ENCODE measurements at regions of chr4 and their contacts with region 1.

Region 1: GRCh38 chr4:76758290-76758882 is 139.6 kb downstream of the SOWAHB start:
- DNase-seq: peak; percentile 81
- ATAC-seq: no peak
- H3K4me3 ChIP-seq: no peak overlapping the region
- H3K27ac ChIP-seq: peak overlapping the region; percentile 77; the same call in 1 of the 2 replicates
- H3K4me1 ChIP-seq: peaks cover 40% of the 10 kb centered on the region
- H3K27me3 ChIP-seq: no peaks in the 10 kb centered on the region
- CTCF ChIP-seq: peak; percentile 77
- POLR2A ChIP-seq: no peak
- RAD21 ChIP-seq: peak; percentile 67

Region 2: DNA sequence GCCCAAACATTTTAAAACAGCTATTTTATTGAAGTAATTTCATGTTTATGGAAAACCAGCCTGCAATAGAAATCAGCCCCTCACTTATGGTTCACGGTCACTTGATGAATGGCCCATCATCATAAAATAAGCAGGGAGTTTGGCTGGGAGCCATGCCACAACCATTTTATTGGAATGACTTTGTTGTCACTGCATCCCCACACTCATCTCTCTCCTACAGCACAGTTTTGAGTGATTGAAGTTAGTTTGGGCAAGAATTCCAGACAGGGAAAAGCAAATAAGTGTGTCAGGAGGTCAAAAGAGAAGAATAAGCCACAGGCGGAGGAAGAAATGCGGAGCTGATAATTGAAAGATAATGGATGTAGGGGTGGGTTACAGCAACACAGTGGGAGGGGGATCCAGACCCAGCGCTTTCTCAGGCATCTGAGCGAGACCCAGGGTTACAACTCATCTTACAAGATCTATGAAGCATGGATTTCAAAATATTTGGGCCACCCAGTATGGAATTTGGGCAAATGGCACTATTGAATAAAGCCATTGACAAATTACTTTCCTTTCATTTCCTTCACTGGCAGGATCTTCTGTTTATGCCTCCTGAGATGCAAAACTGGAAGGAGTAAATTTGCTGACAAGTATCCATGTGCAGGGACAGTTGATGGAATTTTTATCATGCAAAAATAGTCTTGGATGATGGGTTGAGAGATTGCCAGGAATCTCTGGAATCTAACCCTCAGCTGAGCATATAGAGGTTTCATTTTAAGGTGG is 222.6 kb before region 1 on chr4:
- CTCF ChIA-PET with region 1: no interaction called
- POLR2A ChIA-PET with region 1: no interaction called
- dilution Hi-C with region 1: no loop called
- in situ Hi-C with region 1: no loop called
- intact Hi-C with region 1: no loop called
- DNase-seq: peak; percentile 43
- ATAC-seq: no peak; the same call in 1 of the 2 replicates
- H3K4me3 ChIP-seq: no peak overlapping the region
- H3K27ac ChIP-seq: no peak overlapping the region
- H3K4me1 ChIP-seq: peaks cover 3% of the 10 kb centered on the region
- H3K27me3 ChIP-seq: no peaks in the 10 kb centered on the region
- CTCF ChIP-seq: no peak
- POLR2A ChIP-seq: no peak
- RAD21 ChIP-seq: no peak

Region 3: GRCh38 chr4:76570141-76570973 is 188.0 kb before region 1 on chr4:
- CTCF ChIA-PET with region 1: no interaction called
- POLR2A ChIA-PET with region 1: interaction called, 12 read pairs
- dilution Hi-C with region 1: no loop called
- in situ Hi-C with region 1: no loop called
- intact Hi-C with region 1: no loop called
- DNase-seq: peak; percentile 89
- ATAC-seq: peak; percentile 90
- H3K4me3 ChIP-seq: no peak overlapping the region
- H3K27ac ChIP-seq: peak overlapping the region; percentile 6
- H3K4me1 ChIP-seq: peaks cover 13% of the 10 kb centered on the region
- H3K27me3 ChIP-seq: no peaks in the 10 kb centered on the region
- CTCF ChIP-seq: no peak
- POLR2A ChIP-seq: no peak
- RAD21 ChIP-seq: no peak; the same call in 1 of the 2 replicates

Region 4: DNA sequence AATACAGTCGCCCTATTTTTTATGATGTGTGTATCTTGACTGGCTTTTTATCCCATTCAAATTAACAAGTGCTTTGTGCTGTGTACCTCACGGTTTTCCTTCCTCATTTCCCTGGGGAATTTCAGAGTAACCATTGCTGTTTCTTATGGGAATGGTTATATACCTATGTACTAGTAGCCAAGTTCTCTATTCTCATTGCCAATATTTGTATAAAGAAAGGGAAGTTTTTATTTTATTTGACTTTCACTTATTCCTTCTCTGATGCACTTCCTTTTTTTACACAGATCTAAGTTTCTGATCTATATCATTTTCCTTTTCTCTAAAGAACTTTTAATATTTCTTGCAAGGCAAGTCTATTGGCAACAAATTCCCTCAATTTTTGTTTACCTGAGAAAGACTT is 41.7 kb before region 1 on chr4:
- CTCF ChIA-PET with region 1: no interaction called
- POLR2A ChIA-PET with region 1: no interaction called
- dilution Hi-C with region 1: no loop called
- in situ Hi-C with region 1: no loop called
- intact Hi-C with region 1: no loop called
- DNase-seq: no peak
- ATAC-seq: no peak
- H3K4me3 ChIP-seq: no peak overlapping the region
- H3K27ac ChIP-seq: no peak overlapping the region
- H3K4me1 ChIP-seq: peaks cover 7% of the 10 kb centered on the region
- H3K27me3 ChIP-seq: no peaks in the 10 kb centered on the region
- CTCF ChIP-seq: no peak
- POLR2A ChIP-seq: no peak
- RAD21 ChIP-seq: no peak

Region 5: DNA sequence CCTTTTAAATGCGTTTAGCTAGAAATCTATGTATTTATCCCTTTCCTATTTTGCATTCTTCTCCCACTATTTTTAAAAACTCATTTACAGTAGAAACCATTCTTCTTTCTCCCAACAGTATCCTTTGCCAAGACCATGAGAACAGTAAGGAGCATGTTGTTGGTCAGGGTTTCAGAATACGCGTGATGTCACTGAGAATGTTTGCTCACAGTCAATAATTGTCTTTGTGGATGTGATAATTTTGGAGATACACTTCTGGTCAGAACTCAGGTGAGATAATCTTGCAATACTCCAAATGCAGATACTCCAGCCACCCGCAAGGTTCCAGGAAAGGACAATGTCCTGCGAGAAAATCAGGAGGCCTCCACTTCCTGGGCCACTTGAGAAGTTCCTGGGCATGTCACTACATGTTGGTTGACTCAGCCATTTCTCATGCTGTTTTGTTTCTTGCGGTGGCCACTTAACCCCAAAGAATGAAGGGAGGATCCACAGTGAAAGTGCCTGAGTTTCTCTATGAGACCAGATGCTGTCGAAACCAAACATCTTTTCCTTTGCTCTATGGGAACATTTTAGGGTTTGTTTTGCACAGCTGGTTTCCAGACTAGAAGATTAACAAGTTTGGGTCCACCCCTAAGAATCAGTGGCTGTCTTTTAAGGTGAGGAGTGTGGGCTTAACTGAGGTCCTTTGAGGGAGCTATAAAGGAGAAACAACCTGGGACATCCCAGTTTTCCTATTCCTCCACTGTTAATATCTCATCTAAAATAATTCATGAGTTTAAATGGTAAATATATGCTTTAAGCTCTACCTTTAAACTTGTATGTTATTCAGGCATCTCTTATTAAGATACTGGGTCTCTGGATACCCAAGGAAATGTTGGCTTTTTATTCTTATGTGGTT is 23.6 kb after region 1 on chr4:
- CTCF ChIA-PET with region 1: interaction called, 3 read pairs
- POLR2A ChIA-PET with region 1: interaction called, 3 read pairs
- dilution Hi-C with region 1: no loop called
- in situ Hi-C with region 1: no loop called
- intact Hi-C with region 1: loop called (anchors 1 kb)
- DNase-seq: peak; percentile 98
- ATAC-seq: peak; percentile 80
- H3K4me3 ChIP-seq: peak overlapping the region; percentile 24; the same call in 1 of the 2 replicates
- H3K27ac ChIP-seq: peak overlapping the region; percentile 42
- H3K4me1 ChIP-seq: peaks cover 23% of the 10 kb centered on the region
- H3K27me3 ChIP-seq: no peaks in the 10 kb centered on the region
- CTCF ChIP-seq: no peak
- POLR2A ChIP-seq: peak; percentile 75; the same call in 1 of the 2 replicates
- RAD21 ChIP-seq: no peak

Measured in IMR-90 (cell line).